H1 (cell line): ENCODE measurements at regions of chr15 and their contacts with region 1.

Region 1: GRCh38 chr15:46312133-46312740 is 677.4 kb downstream of the SQOR start:
- DNase-seq: peak in 1 of 2 experiments; percentile 90
- H3K4me3 ChIP-seq: no peak overlapping the region
- H3K27ac ChIP-seq: no peak overlapping the region
- H3K4me1 ChIP-seq: no peaks in the 10 kb centered on the region
- H3K27me3 ChIP-seq: no peaks in the 10 kb centered on the region
- CTCF ChIP-seq: peak; percentile 52 to 90 (median 84)
- EP300 ChIP-seq: no peak
- POLR2A ChIP-seq: no peak
- RAD21 ChIP-seq: peak; percentile 96 to 98

Region 2: DNA sequence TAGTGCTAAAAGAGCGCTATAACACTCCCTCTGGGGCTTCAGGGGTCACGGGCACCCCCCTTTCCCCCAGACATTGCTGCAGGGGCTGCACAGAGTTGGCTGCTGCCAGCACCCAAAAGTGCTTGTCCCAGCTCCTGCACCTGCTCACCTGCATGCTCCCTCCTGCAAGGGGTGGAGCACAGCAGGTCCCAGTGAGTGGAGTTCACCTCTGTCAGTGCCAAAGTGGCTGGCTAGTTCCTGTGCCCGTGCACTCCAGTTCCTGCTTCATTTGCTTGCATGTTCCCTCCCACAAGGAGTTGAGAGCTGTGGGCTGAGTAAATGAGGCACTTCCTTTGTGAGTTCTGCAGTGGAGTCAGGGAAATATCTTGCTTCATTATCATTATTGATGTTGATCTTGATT is 200.5 kb before region 1 on chr15:
- CTCF ChIA-PET with region 1: no interaction called
- POLR2A ChIA-PET with region 1: no interaction called
- DNase-seq: no peak
- H3K4me3 ChIP-seq: no peak overlapping the region
- H3K27ac ChIP-seq: no peak overlapping the region
- H3K4me1 ChIP-seq: peaks cover 0 to 2% (median 0%) of the 10 kb centered on the region in 4 experiments; a peak in 1 of 7 replicates
- H3K27me3 ChIP-seq: no peaks in the 10 kb centered on the region
- CTCF ChIP-seq: no peak
- EP300 ChIP-seq: no peak
- POLR2A ChIP-seq: no peak
- RAD21 ChIP-seq: no peak

Region 3: DNA sequence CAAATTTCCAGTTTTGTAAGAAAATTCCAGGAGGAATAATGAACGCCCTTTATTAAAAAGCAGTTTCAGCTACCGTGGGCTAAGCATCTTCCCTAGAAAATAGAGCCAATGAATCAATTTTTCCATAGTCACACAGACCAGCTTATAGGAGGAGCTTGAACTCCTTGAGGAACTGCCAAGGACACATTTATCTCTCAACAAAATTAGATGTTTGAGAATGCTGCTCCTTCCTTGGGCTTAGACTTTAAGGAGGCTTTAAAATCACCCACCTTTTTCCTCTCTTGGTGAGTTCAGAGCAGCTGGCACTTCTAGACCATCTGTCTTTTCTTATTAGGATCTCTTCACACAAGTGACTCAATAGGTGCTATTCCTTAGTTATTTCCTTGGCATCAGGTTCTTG is 89.4 kb before region 1 on chr15:
- CTCF ChIA-PET with region 1: no interaction called
- POLR2A ChIA-PET with region 1: no interaction called
- DNase-seq: no peak
- H3K4me3 ChIP-seq: no peak overlapping the region
- H3K27ac ChIP-seq: no peak overlapping the region
- H3K4me1 ChIP-seq: no peaks in the 10 kb centered on the region
- H3K27me3 ChIP-seq: no peaks in the 10 kb centered on the region
- CTCF ChIP-seq: no peak
- EP300 ChIP-seq: no peak
- POLR2A ChIP-seq: no peak
- RAD21 ChIP-seq: no peak

Region 4: GRCh38 chr15:46354443-46354842 is 42.2 kb after region 1 on chr15:
- CTCF ChIA-PET with region 1: interaction called, 12 read pairs
- POLR2A ChIA-PET with region 1: no interaction called
- DNase-seq: no peak
- H3K4me3 ChIP-seq: no peak overlapping the region
- H3K27ac ChIP-seq: no peak overlapping the region
- H3K4me1 ChIP-seq: no peaks in the 10 kb centered on the region
- H3K27me3 ChIP-seq: no peaks in the 10 kb centered on the region
- CTCF ChIP-seq: peak in 2 of 3 experiments; percentile 24 to 31; a peak in 3 of 4 replicates
- EP300 ChIP-seq: no peak
- POLR2A ChIP-seq: no peak
- RAD21 ChIP-seq: peak; percentile 25 to 44; a peak in 1 of 4 replicates

Region 5: GRCh38 chr15:46502668-46503067 is 190.4 kb after region 1 on chr15:
- CTCF ChIA-PET with region 1: interaction called, 17 read pairs
- POLR2A ChIA-PET with region 1: no interaction called
- DNase-seq: no peak
- H3K4me3 ChIP-seq: no peak overlapping the region
- H3K27ac ChIP-seq: no peak overlapping the region
- H3K4me1 ChIP-seq: no peaks in the 10 kb centered on the region
- H3K27me3 ChIP-seq: no peaks in the 10 kb centered on the region
- CTCF ChIP-seq: peak in 2 of 3 experiments; percentile 7 to 37; a peak in 2 of 4 replicates
- EP300 ChIP-seq: no peak
- POLR2A ChIP-seq: no peak
- RAD21 ChIP-seq: peak; percentile 54 to 56

Region 6: DNA sequence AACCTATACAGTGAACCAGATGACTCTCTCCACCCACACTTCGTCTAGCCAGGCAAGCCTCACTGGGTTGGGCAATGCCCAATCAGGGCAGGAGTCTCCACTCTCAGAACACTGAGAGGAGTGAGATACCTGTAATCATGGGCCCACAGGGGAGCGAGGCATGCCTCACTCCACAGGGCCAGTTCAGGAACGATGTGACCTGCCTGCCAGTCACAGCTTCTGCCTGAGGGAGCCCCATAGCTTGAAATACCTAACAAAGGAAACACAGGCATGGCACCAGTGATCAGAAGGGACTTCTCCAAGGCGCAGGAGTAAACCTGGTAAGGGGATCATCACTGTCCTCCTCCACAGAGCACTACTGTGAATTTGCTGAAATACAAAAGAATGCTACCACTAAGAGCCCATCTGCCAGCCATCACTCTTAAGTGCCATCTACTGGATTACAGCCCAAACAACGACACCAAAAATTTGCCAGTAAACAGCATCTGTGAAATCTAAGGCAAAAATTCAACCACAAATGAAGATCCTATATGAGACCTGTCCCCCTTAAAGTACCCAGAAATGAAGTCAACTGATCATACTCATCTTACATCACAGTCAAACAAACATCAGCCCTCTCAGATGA is 715.2 kb after region 1 on chr15:
- CTCF ChIA-PET with region 1: interaction called, 18 read pairs
- POLR2A ChIA-PET with region 1: no interaction called
- DNase-seq: peak in 1 of 2 experiments; percentile 47
- H3K4me3 ChIP-seq: no peak overlapping the region
- H3K27ac ChIP-seq: no peak overlapping the region
- H3K4me1 ChIP-seq: no peaks in the 10 kb centered on the region
- H3K27me3 ChIP-seq: no peaks in the 10 kb centered on the region
- CTCF ChIP-seq: peak in 2 of 3 experiments; percentile 48 to 65; a peak in 2 of 4 replicates
- EP300 ChIP-seq: no peak
- POLR2A ChIP-seq: no peak
- RAD21 ChIP-seq: peak; percentile 74 to 76